Activated naive CD4-positive, alpha-beta T cell treated with anti-CD3 and anti-CD28 coated beads, Interleukin-2, amount 10 ng/mL, durations not matched to agents 7 days and 5 days (primary cell): ENCODE measurements at regions of chr17 and their contacts with region 1.

Region 1: GRCh38 chr17:47949136-47949759 is 7.9 kb downstream of the PNPO start:
- DNase-seq: peak; percentile 89
- H3K4me3 Mint-ChIP-seq: peak overlapping the region; percentile 25
- H3K27ac Mint-ChIP-seq: peak overlapping the region; percentile 22
- H3K4me1 Mint-ChIP-seq: peaks cover 50% of the 10 kb centered on the region
- H3K27me3 Mint-ChIP-seq: no peaks in the 10 kb centered on the region

Region 2: GRCh38 chr17:47959825-47960655 is 10.8 kb after region 1 on chr17:
- CTCF ChIA-PET with region 1: interaction called, 151 read pairs
- DNase-seq: no peak
- H3K4me3 Mint-ChIP-seq: no peak overlapping the region
- H3K27ac Mint-ChIP-seq: no peak overlapping the region
- H3K4me1 Mint-ChIP-seq: no peaks in the 10 kb centered on the region
- H3K27me3 Mint-ChIP-seq: peaks cover 13% of the 10 kb centered on the region

Region 3: DNA sequence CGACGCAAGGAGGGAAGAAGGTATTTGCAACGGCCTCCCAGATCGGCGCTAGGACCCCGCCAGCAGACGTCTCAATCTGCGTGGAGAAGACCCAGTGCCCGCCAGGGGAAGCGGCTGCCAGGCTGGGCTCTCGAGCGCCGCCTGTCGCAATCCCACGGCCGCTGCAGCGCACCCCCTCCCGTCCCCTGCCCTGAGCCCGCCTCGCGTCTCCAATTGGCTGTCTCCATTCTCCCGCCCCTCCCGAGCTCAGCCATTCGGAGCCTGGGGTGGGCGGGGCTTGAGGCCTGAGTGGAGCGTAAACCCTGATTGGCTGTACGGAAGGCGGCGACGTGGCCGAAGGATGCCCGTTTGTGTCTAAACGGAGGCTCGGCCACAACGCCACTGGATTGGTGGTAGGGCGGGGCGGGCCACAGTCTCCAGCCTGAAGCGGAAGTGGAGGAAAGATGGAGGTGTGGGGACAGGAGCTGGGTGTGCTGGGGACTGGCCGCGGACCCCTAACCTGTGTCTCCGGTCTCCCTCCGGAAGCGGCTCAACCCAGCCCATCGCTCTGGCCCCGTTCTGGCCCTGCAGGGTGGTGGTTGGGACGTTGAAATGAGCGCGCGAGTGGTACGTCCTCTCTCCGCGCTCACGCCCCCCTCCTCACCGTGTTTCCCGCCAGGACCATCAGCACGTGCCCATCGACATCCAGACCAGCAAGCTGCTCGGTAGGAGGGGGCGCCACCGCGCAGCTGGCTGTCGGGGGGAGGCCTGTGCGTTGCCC is 21.6 kb after region 1 on chr17 and contains the start of gene CDK5RAP3:
- CTCF ChIA-PET with region 1: interaction called, 151 read pairs
- DNase-seq: peak; percentile 100
- H3K4me3 Mint-ChIP-seq: peak within 1 kb of the TSS; percentile 98
- H3K27ac Mint-ChIP-seq: peak within 1 kb of the TSS; percentile 94
- H3K4me1 Mint-ChIP-seq: peaks cover 30% of the 10 kb centered on the region
- H3K27me3 Mint-ChIP-seq: peaks cover 15% of the 10 kb centered on the region

Region 4: GRCh38 chr17:47978324-47978723 is 29.1 kb after region 1 on chr17:
- CTCF ChIA-PET with region 1: interaction called, 151 read pairs
- DNase-seq: peak; percentile 69
- H3K4me3 Mint-ChIP-seq: no peak overlapping the region
- H3K27ac Mint-ChIP-seq: no peak overlapping the region
- H3K4me1 Mint-ChIP-seq: peaks cover 9% of the 10 kb centered on the region
- H3K27me3 Mint-ChIP-seq: no peaks in the 10 kb centered on the region

Region 5: DNA sequence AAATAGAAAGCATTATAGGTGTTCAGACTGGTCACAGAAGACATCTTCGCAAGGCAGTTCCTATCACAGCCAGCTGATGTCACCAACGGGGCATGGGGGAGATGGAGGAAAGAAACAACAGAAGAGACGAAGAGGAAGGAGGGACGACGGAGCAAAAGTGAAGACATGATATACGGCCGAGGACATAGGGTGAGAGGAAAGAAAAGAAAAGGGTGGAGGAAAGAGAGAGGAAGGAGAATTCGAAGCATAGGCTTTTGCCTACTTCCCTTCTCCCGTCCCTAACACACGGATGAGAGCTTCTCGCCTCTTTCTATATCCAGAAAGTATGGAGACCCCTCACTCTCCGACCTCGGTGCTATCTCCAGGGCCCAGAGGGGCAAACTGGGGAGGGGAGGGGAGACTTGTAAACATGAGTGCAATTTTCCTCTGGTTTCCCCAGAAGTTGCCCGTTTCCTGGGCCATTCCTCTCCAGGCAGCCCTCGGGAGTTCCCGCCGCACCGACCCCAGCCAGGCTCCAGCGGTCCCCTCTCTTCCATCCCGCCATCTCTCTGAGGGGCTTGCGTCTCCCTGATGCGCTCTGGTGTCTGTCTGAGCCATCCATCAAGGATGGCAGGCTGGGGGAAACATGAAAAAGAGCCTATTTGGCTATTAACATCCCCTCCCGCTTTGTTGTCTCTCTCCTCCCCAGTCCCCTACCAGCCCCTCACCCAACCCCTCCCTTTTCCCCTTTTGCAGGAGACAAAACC is 62.3 kb after region 1 on chr17:
- CTCF ChIA-PET with region 1: interaction called, 50 read pairs
- DNase-seq: peak; percentile 73
- H3K4me3 Mint-ChIP-seq: peak overlapping the region; percentile 64
- H3K27ac Mint-ChIP-seq: no peak overlapping the region
- H3K4me1 Mint-ChIP-seq: peaks cover 30% of the 10 kb centered on the region
- H3K27me3 Mint-ChIP-seq: peaks cover 72% of the 10 kb centered on the region